H1 (cell line): ENCODE measurements at regions of chr18 and their contacts with region 1.

Region 1: GRCh38 chr18:48719974-48720654 is 181.3 kb downstream of the CTIF start:
- DNase-seq: no peak
- H3K4me3 ChIP-seq: no peak overlapping the region
- H3K27ac ChIP-seq: no peak overlapping the region
- H3K4me1 ChIP-seq: peaks cover 0 to 2% (median 0%) of the 10 kb centered on the region in 4 experiments; a peak in 2 of 7 replicates
- H3K27me3 ChIP-seq: no peaks in the 10 kb centered on the region
- CTCF ChIP-seq: no peak
- EP300 ChIP-seq: no peak
- POLR2A ChIP-seq: no peak
- RAD21 ChIP-seq: no peak

Region 2: DNA sequence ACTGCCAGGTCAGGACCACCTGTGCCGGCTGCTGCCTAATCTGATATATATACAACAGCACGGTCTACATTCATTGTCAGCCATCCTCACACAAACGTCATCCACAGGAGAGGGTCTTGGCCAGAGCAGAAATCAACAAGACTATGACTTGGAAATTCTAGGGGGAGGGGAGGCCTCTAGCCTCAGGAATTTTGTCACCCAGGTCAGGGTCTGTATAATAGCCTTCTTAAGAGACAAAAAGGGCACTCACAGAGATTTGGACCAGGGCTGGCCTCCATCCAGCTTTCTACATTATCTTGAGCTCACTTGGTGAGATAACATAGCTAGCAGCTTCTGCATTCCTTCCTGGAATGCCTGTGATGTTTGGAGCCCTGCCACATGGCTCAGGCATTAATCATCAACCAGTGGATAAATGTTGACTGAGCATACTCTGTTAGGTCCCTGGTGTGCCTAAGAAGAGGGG is 231.7 kb before region 1 on chr18:
- CTCF ChIA-PET with region 1: no interaction called
- POLR2A ChIA-PET with region 1: no interaction called
- DNase-seq: no peak
- H3K4me3 ChIP-seq: no peak overlapping the region
- H3K27ac ChIP-seq: no peak overlapping the region
- H3K4me1 ChIP-seq: no peaks in the 10 kb centered on the region
- H3K27me3 ChIP-seq: no peaks in the 10 kb centered on the region
- CTCF ChIP-seq: no peak
- EP300 ChIP-seq: no peak
- POLR2A ChIP-seq: no peak
- RAD21 ChIP-seq: no peak

Region 3: GRCh38 chr18:48769006-48769636 is 49.0 kb after region 1 on chr18:
- CTCF ChIA-PET with region 1: interaction called, 11 read pairs
- POLR2A ChIA-PET with region 1: no interaction called
- DNase-seq: no peak
- H3K4me3 ChIP-seq: no peak overlapping the region
- H3K27ac ChIP-seq: no peak overlapping the region
- H3K4me1 ChIP-seq: peaks cover 0 to 7% (median 1%) of the 10 kb centered on the region in 4 experiments; a peak in 2 of 7 replicates
- H3K27me3 ChIP-seq: no peaks in the 10 kb centered on the region
- CTCF ChIP-seq: peak in 2 of 3 experiments; percentile 21 to 23; a peak in 3 of 4 replicates
- EP300 ChIP-seq: no peak
- POLR2A ChIP-seq: no peak
- RAD21 ChIP-seq: no peak

Region 4: DNA sequence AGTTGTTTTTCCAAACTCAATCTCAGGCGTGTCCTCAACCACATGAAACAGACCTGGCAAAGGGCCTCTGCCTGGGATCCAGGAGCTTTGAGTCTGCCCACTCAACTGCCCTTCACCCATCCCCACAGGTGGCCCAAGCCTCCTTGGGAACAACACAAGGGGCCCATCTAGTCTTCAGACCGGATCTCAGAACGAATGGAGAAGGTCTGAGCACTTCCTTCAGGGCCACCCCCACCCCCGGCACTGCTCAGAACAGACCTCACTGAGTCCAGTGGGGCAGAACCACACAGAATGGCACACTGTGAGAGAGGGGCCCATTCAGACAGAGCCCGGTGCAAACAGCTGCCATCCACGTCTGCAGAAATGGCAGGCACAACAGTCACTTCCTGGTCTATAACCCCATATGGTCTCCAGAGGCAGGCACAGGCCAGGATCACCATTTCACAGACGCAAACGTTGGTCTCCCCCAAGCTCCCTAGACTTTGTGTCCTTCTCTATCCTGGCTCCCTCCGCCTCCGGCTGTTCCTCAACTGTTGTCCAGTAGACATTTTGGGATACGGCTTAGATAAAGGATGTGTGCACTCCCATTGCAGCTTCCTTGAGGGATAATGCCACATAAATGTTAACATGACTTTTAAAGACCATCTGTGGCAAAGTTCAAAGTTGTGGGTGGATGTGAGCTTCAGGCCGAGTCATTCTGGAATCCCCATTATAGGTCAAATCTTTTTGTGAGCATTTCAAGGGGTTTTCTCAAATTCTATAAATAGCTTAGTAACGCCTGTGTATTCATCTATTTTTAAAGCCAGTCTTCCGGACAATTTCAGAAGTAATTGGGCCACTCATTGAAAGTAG is 81.0 kb after region 1 on chr18:
- CTCF ChIA-PET with region 1: no interaction called
- POLR2A ChIA-PET with region 1: no interaction called
- DNase-seq: peak in 1 of 2 experiments; percentile 28
- H3K4me3 ChIP-seq: no peak overlapping the region
- H3K27ac ChIP-seq: no peak overlapping the region
- H3K4me1 ChIP-seq: no peaks in the 10 kb centered on the region
- H3K27me3 ChIP-seq: no peaks in the 10 kb centered on the region; a peak in 1 of 7 replicates
- CTCF ChIP-seq: no peak
- EP300 ChIP-seq: no peak
- POLR2A ChIP-seq: no peak
- RAD21 ChIP-seq: no peak